Activated CD4-positive, alpha-beta T cell treated with anti-CD3 and anti-CD28 coated beads, Interleukin-2, amount 10 ng/mL, durations not matched to agents 24 days and 14 days (primary cell): ENCODE measurements at regions of chr12 and their contacts with region 1.

Region 1: DNA sequence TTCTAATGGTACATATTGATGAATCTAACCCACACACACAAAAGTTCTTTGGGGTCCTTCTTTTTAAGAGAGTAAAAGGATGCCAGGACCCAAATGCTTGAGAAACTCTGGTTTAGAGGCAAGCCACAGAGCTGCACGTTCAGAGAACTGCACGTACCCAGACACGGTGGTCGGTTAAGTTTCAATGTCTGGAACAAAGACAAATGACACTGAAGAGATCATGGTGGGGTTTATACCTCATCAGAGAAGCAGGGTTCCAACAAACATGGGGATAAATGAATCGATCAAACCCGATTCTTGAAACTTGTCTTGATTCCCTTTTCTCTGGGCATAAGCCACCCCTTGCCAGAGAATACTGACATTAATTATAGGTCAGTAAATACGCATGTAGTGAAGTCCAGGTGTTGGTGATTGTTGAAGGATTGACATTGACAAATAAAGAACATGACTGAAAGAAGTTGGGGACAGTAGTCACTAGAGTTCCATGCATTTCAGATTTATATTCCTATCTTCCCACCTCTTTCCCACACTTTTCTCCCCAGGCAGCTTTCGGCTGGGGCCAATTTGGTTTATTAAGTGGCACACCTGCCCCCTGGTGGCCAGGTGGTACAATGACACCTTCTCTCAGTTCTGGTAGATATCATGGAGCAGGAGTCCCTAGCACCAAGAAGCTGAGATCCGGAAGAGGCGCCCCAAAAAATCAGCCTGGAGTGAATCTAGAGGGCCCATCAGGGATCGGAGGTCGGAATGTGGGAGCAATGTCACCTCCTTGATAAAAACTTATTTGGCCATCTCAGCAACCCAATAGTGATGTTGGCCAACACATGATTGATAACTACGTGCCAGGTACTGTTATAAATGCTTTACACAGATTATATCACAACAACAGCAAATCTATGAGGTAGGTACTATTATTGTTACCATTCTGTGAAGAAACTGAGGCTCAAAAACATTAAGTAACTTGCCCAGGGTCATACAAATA is 17.8 kb upstream of the HDAC7 start:
- DNase-seq: peak; percentile 89
- H3K4me3 Mint-ChIP-seq: no peak overlapping the region
- H3K27ac Mint-ChIP-seq: peak overlapping the region; percentile 17
- H3K4me1 Mint-ChIP-seq: peaks cover 66% of the 10 kb centered on the region
- H3K27me3 Mint-ChIP-seq: no peaks in the 10 kb centered on the region

Region 2: DNA sequence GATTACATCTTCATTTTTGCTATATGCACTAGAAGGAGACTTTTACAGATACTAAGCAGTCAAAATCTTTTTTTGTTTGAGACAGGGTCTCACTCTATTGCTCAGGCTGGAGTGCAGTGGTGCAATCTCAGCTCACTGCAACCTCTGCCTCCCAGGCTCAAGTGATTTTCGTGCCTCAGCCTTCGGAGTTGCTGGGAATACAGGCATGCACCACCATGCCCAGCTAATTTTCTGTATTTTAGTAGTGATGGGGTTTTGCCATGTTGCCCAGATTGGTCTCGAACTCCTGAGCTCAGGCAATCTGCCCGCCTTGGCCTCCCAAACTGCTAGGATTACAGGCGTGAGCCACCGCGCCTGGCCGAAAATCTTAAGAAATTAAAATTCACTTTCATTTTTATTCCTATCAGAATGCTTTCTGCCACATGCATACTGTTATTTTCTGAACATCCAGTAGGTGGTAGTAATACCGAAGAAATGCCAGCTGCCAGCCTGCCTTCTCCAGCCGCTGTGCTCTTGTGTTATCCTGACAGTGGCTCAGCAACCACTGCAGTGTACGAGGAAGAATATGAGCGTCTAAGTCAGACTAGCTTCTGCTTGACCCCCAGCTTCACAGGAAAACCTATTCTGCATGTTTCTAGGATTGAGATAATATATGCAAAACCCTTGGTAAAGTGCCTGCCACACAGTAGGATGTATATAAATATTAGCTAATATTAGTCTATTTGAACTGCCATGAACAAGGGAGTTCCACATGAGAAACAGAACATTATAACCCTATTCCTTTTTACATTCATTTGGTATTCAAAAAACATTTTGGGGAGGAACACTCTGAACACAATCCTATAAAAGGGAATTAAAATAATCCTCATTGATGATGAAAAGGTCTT is 185.9 kb before region 1 on chr12:
- intact Hi-C with region 1: loop called (anchors 5 kb)
- DNase-seq: peak; percentile 84
- H3K4me3 Mint-ChIP-seq: peak overlapping the region; percentile 7
- H3K27ac Mint-ChIP-seq: peak overlapping the region; percentile 5
- H3K4me1 Mint-ChIP-seq: peaks cover 14% of the 10 kb centered on the region
- H3K27me3 Mint-ChIP-seq: no peaks in the 10 kb centered on the region

Region 3: DNA sequence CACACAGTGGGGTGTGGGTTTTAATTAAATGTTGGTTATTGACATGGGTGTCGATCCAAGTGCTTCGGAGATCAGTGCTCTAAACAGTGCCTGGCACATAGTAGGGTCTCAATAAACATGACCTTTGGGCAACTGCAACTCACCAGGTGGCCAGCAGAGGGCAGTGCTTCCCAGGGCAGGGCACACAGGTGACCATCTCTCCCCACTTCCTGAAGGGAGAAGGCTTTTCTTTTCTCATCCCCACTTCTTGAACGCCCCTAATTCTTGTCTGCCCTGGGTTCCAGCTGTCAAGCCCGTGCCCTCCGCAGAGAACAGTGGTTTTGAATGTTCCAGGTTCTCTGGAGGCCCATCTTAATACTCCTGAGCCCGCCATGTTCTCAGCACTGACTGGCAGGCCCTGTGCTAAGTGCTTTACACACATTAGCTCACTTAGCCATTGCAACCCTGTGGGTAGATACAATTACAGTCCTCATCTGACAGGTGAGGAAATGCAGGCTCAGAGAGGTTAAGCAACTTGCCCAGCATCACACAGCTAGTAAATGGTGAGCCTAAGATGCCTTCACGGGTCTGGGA is 95.1 kb before region 1 on chr12:
- intact Hi-C with region 1: loop called (anchors 1 kb)
- DNase-seq: peak; percentile 93
- H3K4me3 Mint-ChIP-seq: no peak overlapping the region
- H3K27ac Mint-ChIP-seq: no peak overlapping the region
- H3K4me1 Mint-ChIP-seq: peaks cover 10% of the 10 kb centered on the region
- H3K27me3 Mint-ChIP-seq: peaks cover 5% of the 10 kb centered on the region

Region 4: GRCh38 chr12:47779301-47779942 is 58.1 kb before region 1 on chr12:
- intact Hi-C with region 1: loop called (anchors 1 kb)
- DNase-seq: peak; percentile 97
- H3K4me3 Mint-ChIP-seq: no peak overlapping the region
- H3K27ac Mint-ChIP-seq: peak overlapping the region; percentile 64
- H3K4me1 Mint-ChIP-seq: peaks cover 43% of the 10 kb centered on the region
- H3K27me3 Mint-ChIP-seq: no peaks in the 10 kb centered on the region

Region 5: GRCh38 chr12:47797441-47797840 is 40.0 kb before region 1 on chr12:
- intact Hi-C with region 1: loop called (anchors 1 kb)
- DNase-seq: peak; percentile 74
- H3K4me3 Mint-ChIP-seq: no peak overlapping the region
- H3K27ac Mint-ChIP-seq: peak overlapping the region; percentile 81
- H3K4me1 Mint-ChIP-seq: peaks cover 22% of the 10 kb centered on the region
- H3K27me3 Mint-ChIP-seq: no peaks in the 10 kb centered on the region

Region 6: GRCh38 chr12:47812797-47813510 is 24.5 kb before region 1 on chr12:
- intact Hi-C with region 1: loop called (anchors 1 kb)
- DNase-seq: peak; percentile 97
- H3K4me3 Mint-ChIP-seq: peak overlapping the region; percentile 88
- H3K27ac Mint-ChIP-seq: peak overlapping the region; percentile 99
- H3K4me1 Mint-ChIP-seq: peaks cover 81% of the 10 kb centered on the region
- H3K27me3 Mint-ChIP-seq: no peaks in the 10 kb centered on the region